Astrocyte of the cerebellum (primary cell): ENCODE measurements at regions of chr20 and their contacts with region 1.

Region 1: DNA sequence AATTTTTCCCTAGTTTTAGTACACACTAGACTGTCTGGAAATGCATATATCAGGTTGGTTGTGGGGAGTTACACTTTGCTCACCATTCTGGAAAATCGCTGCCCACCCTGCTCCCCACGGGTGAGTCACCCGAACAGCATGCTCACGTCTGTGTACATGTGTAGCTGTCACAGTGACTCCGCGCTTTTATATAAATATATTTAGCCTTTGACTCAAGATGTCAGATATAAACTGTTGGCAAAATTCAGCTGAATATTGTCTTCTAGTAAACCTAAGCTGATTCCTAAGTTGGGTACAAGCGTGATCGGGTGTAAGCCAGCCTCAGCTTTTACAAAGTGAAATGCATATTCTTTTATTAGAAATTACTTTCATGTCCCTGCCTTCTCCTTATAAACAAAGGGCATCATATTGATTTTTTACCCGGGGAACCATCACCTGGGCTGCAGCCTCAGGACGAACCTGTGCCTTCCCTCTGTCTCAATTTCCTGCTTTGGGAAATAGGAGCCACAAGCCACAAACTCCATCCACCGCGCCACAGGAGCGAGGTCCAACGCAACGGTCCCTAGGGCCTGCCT is 4.3 kb downstream of the SDCBP2 start:
- DNase-seq: no peak
- H3K4me3 ChIP-seq: peak overlapping the region; percentile 93
- CTCF ChIP-seq: no peak

Region 2: DNA sequence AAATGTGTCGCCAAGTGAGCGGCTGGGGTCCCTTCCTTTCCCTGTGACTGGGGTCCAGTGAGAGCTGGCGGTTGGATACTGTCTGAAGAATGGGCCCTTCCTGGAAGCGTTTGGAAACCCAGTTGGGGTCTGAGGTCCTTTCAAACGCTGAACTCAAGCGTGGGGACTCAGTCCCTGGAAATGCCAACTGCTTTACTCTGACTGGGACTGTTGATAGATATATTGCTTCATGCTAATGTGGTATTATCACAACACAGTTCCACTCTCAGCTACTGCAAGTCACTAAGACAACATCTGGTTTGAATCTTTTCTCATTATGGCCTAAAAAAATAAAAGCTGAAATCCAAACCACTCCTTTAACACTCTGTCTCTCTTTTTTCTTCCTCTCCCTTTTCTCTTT is 229.9 kb before region 1 on chr20:
- in situ Hi-C with region 1: no loop called
- DNase-seq: no peak
- H3K4me3 ChIP-seq: no peak overlapping the region
- CTCF ChIP-seq: no peak

Region 3: DNA sequence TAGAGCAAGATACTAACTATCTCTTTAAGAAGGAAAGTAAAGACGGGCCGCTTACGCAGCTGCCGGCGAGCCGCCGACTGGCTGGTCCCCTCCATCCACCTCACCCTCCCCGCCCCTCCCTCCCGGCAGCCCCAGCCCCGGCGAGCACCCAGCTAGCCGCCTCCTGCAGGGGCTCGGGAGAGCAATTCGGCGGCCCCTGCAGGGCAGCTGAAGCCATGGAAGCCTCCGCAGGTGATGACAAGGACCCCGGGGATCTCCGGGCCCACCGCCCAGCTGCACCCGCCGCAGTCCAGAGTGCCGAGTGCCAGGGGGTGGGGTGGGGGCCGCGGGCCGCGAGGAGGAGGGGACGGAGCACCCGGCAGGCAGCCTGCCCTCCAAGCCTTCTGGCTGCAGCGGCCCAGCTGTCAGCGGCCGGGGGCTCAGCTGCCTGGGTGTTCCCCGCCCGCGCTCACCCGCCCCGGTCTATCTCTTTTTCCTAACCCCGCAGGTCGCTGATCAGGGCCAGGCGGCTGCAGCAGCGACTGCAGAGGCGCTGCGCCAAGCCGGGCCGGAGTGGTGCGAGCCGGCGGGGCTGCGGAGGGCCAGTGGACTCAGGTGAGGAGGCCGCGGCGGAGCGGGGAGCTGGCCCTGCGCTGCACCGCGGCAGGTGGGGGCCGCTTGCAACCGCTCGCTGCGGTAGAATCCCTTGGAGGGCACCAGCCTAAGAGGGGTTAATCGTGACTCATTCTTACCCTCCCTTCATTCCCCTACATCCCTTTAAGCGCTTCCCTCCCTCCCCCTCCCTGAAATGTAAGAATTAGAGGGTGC is 58.3 kb before region 1 on chr20 and contains the start of gene SNPH:
- in situ Hi-C with region 1: no loop called
- DNase-seq: peak; percentile 36
- H3K4me3 ChIP-seq: peak within 1 kb of the TSS; percentile 62
- CTCF ChIP-seq: no peak

Region 4: DNA sequence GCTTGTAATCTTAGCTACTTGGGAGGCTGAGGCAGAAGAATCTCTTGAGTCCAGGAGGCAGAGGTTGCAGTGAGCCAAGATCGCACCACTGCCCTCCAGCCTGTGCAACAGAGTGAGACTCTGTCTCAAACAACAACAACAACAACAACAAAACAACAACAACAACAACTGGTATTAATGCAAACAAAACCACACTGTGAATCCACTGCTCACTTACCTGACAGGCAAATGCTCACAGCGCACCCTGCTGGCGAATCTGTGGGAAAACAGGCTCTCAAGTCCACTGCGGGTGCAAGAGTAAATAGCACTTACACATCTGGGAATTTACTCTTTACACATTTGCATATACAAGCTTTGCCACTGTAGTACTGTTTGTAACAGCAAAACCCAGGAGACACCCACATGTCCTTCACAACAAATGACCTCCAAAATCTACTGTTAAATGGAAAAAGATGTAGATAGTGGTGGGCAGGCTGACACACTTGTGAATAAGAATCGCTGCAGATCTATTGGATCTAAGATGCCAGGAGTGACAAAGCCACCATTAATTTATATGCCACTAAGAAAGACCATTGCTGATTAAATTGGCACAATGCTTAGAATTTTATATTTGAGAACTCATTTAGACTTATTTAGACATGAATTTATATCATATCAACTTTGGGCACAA is 112.7 kb after region 1 on chr20:
- in situ Hi-C with region 1: loop called (anchors 5 kb)
- DNase-seq: peak; percentile 76
- H3K4me3 ChIP-seq: no peak overlapping the region
- CTCF ChIP-seq: peak; percentile 82

Region 5: DNA sequence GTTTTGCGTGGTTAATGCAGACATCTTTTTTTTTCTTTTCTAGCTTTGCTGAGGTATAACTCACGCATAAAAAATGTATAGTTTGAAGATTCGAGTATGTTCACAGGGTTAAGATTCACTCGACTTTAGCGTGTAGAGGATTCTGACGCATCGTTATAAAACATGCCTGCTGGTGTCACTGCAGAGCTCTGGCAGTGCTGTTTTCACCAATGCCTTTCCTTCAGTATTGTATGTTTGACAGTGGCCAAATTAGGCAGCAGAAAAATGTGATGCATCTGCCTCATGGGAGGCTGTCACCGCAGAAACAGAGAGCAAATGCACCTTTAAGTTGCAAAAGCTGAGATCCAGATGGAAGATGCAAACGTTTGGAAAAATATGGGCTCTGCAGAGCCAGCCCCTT is 184.6 kb after region 1 on chr20:
- in situ Hi-C with region 1: no loop called
- DNase-seq: no peak
- H3K4me3 ChIP-seq: no peak overlapping the region
- CTCF ChIP-seq: peak; percentile 39